Prostate gland (tissue), 2 donors: ENCODE measurements at regions of chr1 and their contacts with region 1.

Region 1: DNA sequence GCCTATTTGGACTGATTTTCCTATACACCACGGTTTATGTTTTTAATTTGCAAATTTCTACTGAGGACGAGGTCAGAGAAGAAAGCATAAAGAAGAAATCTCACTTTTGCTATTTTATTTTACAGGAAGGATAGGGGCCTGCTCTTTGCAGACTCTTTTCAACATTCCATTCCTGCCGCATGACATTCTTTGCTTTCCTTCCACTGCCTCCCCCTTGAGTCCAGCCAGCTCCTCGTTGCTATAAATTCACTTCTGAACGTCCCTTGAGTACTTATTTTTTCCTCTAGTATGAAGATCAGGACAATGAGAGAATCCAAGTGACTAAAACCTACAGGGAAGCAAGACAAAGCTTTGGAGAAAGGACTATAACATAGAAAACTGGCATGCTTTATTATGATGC is 53.4 kb upstream of the PTGFR start:
- DNase-seq: no peak
- H3K4me3 ChIP-seq: no peak overlapping the region
- H3K27ac ChIP-seq: no peak overlapping the region
- H3K4me1 ChIP-seq: no peaks in the 10 kb centered on the region
- H3K27me3 ChIP-seq: no peaks in the 10 kb centered on the region
- CTCF ChIP-seq: no peak
- POLR2A ChIP-seq: no peak

Region 2: DNA sequence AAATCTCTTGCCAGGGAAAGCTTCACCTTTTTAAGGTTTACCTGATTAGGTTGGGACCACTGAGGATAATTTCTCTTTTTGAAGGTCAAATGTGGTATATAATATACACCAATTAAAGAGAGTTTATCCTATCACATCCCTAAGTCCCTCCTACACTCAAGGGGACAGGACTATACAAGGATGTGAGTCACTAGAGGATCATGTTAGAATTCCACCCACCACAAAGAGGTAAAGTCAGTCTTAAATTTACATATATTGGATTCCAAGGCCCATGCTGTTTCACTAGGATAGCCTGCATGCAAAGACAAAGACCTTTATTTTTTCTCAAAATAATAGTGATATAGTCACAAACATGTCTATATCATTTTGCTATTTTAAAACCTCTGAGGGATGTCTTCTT is 227.2 kb before region 1 on chr1:
- intact Hi-C with region 1: no loop called
- DNase-seq: no peak
- H3K4me3 ChIP-seq: no peak overlapping the region
- H3K27ac ChIP-seq: no peak overlapping the region
- H3K4me1 ChIP-seq: no peaks in the 10 kb centered on the region
- H3K27me3 ChIP-seq: peaks cover 3% of the 10 kb centered on the region
- CTCF ChIP-seq: no peak
- POLR2A ChIP-seq: no peak

Region 3: DNA sequence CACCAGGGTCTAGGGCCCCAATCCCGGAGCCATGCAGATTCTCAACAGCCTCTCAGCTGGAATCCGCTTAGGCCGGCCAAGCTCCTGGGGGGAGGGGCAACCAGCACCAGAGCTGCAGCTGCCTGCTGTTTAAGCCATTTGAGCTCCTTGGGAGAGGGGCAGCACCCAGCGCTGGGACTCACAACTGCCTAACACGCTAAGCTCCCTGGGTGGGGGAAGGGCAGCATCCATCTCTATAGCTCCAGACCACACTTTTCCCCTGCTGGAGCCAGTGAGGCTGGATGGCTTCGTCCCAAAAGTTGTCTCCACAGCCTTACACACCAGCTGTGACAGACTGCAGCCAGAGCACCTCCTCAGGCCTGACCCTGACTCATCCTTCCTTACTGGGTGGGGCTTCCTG is 46.5 kb after region 1 on chr1:
- intact Hi-C with region 1: loop called (anchors 10 kb)
- DNase-seq: no peak
- H3K4me3 ChIP-seq: no peak overlapping the region
- H3K27ac ChIP-seq: no peak overlapping the region
- H3K4me1 ChIP-seq: no peaks in the 10 kb centered on the region
- H3K27me3 ChIP-seq: no peaks in the 10 kb centered on the region
- CTCF ChIP-seq: no peak
- POLR2A ChIP-seq: no peak

Region 4: DNA sequence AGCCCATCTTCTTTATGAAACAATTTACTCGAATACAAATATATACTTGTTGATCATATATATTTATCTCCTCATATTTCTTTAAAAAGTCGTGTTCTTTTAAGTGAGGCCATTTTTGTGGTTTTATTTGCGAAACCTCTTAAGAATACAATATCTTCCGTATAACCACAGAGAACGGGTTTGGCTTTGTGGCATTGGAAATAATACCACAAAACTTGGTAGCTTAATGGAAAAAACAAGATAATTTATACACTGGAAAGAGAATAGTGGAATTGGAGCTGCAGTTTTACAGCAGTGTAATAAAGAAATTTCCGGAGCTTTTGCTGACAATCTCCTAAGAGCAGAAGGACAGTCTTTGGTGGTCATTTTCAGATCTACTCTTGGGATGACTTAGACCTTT is 82.8 kb after region 1 on chr1:
- intact Hi-C with region 1: no loop called
- DNase-seq: no peak
- H3K4me3 ChIP-seq: no peak overlapping the region
- H3K27ac ChIP-seq: no peak overlapping the region
- H3K4me1 ChIP-seq: no peaks in the 10 kb centered on the region
- H3K27me3 ChIP-seq: no peaks in the 10 kb centered on the region
- CTCF ChIP-seq: no peak
- POLR2A ChIP-seq: no peak

Region 5: DNA sequence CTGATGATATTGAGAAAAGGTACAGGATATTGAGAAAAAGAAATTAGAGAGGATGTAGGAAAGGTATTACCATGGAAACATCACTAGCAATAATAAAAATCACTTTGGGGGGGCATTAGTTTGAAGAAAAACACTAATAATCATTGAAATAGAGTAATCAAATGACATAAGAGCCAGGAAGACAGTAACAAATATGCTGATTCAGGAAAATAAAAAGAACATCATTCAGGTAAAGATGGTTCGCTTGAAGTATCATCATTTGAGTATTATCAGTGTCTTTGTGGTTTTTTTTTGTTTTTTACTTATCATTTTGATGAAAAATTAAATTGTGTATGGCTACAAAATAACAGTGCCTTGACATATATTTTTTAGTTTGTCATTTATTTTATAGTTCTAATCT is 376.8 kb after region 1 on chr1:
- intact Hi-C with region 1: no loop called
- DNase-seq: no peak
- H3K4me3 ChIP-seq: no peak overlapping the region
- H3K27ac ChIP-seq: no peak overlapping the region
- H3K4me1 ChIP-seq: no peaks in the 10 kb centered on the region
- H3K27me3 ChIP-seq: no peaks in the 10 kb centered on the region
- CTCF ChIP-seq: no peak
- POLR2A ChIP-seq: no peak